ENCODE measurements at regions of chr9 and their contacts with region 1.

Region 1: DNA sequence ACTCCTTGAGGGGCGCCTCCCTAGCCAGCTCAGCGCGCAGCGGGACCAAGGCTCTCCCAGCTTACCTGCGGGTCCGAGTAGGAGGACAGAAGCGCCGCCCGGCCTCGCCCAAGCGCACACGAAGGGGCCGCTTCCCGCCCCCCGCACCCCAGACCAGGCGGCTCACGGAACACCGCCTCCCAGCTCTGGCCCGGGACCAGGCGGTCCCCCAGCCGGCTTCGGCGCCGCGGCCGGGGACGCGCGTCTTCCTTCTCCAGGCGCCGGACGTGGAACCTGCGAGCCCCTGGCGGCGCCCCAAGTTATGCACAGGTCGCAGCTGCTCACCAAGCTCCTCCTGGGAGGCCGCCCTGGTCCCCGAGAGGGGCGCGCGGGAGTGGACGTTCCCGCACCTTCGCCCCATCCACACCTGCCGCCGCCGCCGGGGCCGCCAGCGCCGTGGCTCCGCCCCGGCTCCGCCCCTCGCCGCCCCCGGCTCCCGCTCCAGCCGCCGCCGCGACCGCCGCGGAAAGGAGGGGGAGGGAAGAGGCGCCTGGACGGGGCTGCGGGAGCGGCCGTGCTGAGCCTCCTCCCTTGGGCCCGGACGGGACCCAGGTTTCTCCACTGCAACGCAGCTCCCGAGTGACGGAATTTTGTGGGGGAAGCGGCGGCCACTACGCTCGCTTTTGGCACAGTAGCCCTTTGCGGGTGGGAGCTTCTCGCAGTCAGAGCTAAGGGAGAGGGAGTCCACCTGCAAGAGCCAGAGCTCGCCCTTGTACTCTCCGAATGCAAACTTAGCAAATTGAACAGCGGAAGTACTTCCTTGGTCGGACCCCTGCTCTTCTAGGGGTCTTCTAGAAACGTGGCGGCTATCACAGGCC is 77.5 kb upstream of the IFNE start:
- DNase-seq: peak; percentile 30 to 71 (median 53)
- ATAC-seq: peak; percentile 87
- H3K4me3 ChIP-seq: peak overlapping the region; percentile 74
- H3K4me3 Mint-ChIP-seq: peak overlapping the region; percentile 88 to 99 (median 96)
- H3K27ac ChIP-seq: peak overlapping the region; percentile 67
- H3K27ac Mint-ChIP-seq: peak overlapping the region in 8 of 9 donors; percentile 34 to 76 (median 70)
- H3K4me1 ChIP-seq: peaks cover 0 to 21% of the 10 kb centered on the region in 2 donors
- H3K4me1 Mint-ChIP-seq: peaks cover 17 to 53% (median 28%) of the 10 kb centered on the region in 7 donors
- H3K27me3 ChIP-seq: peaks cover 9 to 31% of the 10 kb centered on the region in 2 donors
- H3K27me3 Mint-ChIP-seq: peaks cover 4 to 64% (median 41%) of the 10 kb centered on the region in 5 donors

Region 2: GRCh38 chr9:21465859-21466518 is 93.7 kb before region 1 on chr9:
- CTCF ChIA-PET with region 1: interaction called, 4 read pairs
- POLR2A ChIA-PET with region 1: no interaction called
- intact Hi-C with region 1: loop called in 1 of 2 experiments (anchors 1 kb)
- DNase-seq: peak in 7 of 9 donors; percentile 37 to 67 (median 59)
- ATAC-seq: peak; percentile 85
- H3K4me3 ChIP-seq: no peak overlapping the region
- H3K4me3 Mint-ChIP-seq: no peak overlapping the region
- H3K27ac ChIP-seq: no peak overlapping the region
- H3K27ac Mint-ChIP-seq: no peak overlapping the region
- H3K4me1 ChIP-seq: no peaks in the 10 kb centered on the region
- H3K4me1 Mint-ChIP-seq: peaks cover 0 to 4% (median 0%) of the 10 kb centered on the region in 7 donors
- H3K27me3 ChIP-seq: no peaks in the 10 kb centered on the region
- H3K27me3 Mint-ChIP-seq: peaks cover under 1 to 37% (median 4%) of the 10 kb centered on the region in 5 donors

Region 3: GRCh38 chr9:21542787-21543186 is 16.9 kb before region 1 on chr9:
- CTCF ChIA-PET with region 1: no interaction called
- POLR2A ChIA-PET with region 1: no interaction called
- intact Hi-C with region 1: no loop called
- DNase-seq: no peak
- ATAC-seq: no peak
- H3K4me3 ChIP-seq: no peak overlapping the region
- H3K4me3 Mint-ChIP-seq: no peak overlapping the region
- H3K27ac ChIP-seq: no peak overlapping the region
- H3K27ac Mint-ChIP-seq: no peak overlapping the region
- H3K4me1 ChIP-seq: no peaks in the 10 kb centered on the region
- H3K4me1 Mint-ChIP-seq: peaks cover 0 to 7% (median 3%) of the 10 kb centered on the region in 7 donors
- H3K27me3 ChIP-seq: no peaks in the 10 kb centered on the region
- H3K27me3 Mint-ChIP-seq: no peaks in the 10 kb centered on the region

Region 4: GRCh38 chr9:21616082-21616778 is 56.6 kb after region 1 on chr9:
- CTCF ChIA-PET with region 1: interaction called, 3 read pairs
- POLR2A ChIA-PET with region 1: interaction called, 3 read pairs
- intact Hi-C with region 1: loop called in 1 of 2 experiments (anchors 1 kb)
- DNase-seq: no peak
- ATAC-seq: no peak
- H3K4me3 ChIP-seq: no peak overlapping the region
- H3K4me3 Mint-ChIP-seq: peak overlapping the region in 2 of 10 donors; percentile 16 to 31
- H3K27ac ChIP-seq: no peak overlapping the region
- H3K27ac Mint-ChIP-seq: no peak overlapping the region
- H3K4me1 ChIP-seq: peaks cover 20 to 39% of the 10 kb centered on the region in 2 donors
- H3K4me1 Mint-ChIP-seq: peaks cover 10 to 53% (median 39%) of the 10 kb centered on the region in 7 donors
- H3K27me3 ChIP-seq: no peaks in the 10 kb centered on the region
- H3K27me3 Mint-ChIP-seq: peaks cover 0 to 4% (median 0%) of the 10 kb centered on the region in 5 donors

Region 5: DNA sequence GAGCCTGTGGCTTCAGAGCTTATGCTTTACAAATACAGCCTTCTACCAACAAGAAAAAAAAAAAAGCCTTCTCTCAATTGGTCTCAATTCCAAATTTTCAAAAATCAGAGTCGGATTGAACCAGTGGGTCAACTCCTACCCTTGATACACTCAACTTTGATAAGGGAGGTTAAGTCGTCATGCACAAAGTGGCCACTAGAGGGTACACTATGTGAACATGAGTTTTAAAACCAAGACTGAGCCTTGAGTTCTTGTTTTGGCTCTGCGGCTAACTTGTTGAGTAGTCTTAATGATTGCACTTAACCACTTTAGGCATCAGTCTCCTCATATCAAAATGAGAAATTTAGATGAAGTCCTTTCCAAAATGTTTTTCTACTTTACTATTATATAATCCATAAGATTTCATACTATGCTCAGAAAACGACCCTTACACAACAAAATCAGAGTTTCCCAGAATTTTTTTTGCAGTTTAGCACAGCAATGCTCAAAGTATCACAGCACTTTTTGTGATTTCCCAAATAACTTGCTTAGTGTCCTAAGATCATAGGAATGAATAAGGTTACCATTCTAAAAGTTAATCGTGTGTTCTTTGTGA is 149.9 kb after region 1 on chr9:
- CTCF ChIA-PET with region 1: interaction called, 3 read pairs
- POLR2A ChIA-PET with region 1: no interaction called
- intact Hi-C with region 1: loop called in 1 of 2 experiments (anchors 2 kb)
- DNase-seq: peak; percentile 14 to 56 (median 46)
- ATAC-seq: peak; percentile 88
- H3K4me3 ChIP-seq: no peak overlapping the region
- H3K4me3 Mint-ChIP-seq: no peak overlapping the region
- H3K27ac ChIP-seq: no peak overlapping the region
- H3K27ac Mint-ChIP-seq: no peak overlapping the region
- H3K4me1 ChIP-seq: no peaks in the 10 kb centered on the region
- H3K4me1 Mint-ChIP-seq: peaks cover 0 to 22% (median 15%) of the 10 kb centered on the region in 7 donors
- H3K27me3 ChIP-seq: no peaks in the 10 kb centered on the region
- H3K27me3 Mint-ChIP-seq: peaks cover 0 to 27% (median 0%) of the 10 kb centered on the region in 5 donors

Measured in naive thymus-derived CD4-positive, alpha-beta T cell (primary cell).